Thyroid gland (tissue), 4 donors: ENCODE measurements at regions of chr22 and their contacts with region 1.

Region 1: DNA sequence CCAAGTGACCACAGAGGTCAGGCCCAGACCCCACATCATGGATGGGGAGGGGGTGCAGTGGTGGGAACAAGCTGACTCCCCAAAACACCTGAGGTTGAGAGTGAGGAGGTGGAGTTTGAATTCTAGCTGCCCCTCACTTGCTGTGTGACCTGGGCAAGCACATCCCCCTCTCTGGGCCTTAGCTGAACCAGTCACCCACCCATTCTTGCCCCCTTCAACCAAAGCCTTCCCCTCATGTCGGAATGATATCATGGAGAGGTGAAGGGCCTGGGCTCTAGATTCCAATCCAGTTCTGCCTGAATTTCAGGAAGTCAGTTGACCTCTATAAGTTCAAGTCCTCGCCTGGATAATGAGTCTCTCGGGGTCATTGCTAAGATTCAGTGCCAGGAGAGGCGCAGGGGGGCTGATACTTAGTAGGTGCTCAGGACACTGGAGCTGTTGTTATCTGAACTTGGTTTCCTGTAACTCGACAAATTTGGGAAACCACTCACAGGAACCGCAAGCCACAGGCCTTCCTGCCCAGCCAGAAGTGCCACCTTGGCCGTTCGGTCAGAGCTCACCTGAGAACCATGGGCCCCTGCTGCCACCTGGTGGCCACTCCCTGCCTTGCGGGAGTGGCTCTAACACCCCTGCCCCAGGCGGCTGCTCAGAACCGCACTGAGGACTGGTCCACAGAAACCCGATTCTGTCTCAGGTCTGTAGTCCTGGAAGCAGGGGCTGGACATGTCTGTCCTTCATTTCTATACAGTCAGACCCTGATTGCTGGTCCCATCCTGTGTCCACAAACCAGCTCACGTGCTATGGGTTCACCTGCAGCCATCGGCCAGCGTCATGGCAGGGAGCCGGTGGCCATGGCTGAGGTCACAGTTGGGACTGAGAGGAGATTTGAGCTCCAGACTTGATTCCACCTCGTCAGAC is 6.9 kb downstream of the CDC42EP1 start:
- DNase-seq: peak; percentile 87 to 91
- H3K4me3 ChIP-seq: no peak overlapping the region
- H3K27ac ChIP-seq: peak overlapping the region in 2 of 3 donors; percentile 5 to 50
- H3K4me1 ChIP-seq: peaks cover 28 to 54% of the 10 kb centered on the region in 2 donors
- H3K27me3 ChIP-seq: no peaks in the 10 kb centered on the region
- CTCF ChIP-seq: peak; percentile 92 to 96 (median 94)
- POLR2A ChIP-seq: no peak

Region 2: GRCh38 chr22:37519268-37520195 is 47.6 kb before region 1 on chr22 and contains the start of gene CARD10:
- intact Hi-C with region 1: no loop called
- DNase-seq: peak; percentile 39 to 47
- H3K4me3 ChIP-seq: peak within 1 kb of the TSS in 2 of 3 donors; percentile 24 to 49
- H3K27ac ChIP-seq: peak within 1 kb of the TSS in 2 of 3 donors; percentile 41 to 53
- H3K4me1 ChIP-seq: peaks cover 3 to 14% of the 10 kb centered on the region in 2 donors
- H3K27me3 ChIP-seq: no peaks in the 10 kb centered on the region
- CTCF ChIP-seq: no peak
- POLR2A ChIP-seq: no peak
- total RNA-seq, gene CARD10: 6.5 to 17.3 (median 11.0) TPM

Region 3: DNA sequence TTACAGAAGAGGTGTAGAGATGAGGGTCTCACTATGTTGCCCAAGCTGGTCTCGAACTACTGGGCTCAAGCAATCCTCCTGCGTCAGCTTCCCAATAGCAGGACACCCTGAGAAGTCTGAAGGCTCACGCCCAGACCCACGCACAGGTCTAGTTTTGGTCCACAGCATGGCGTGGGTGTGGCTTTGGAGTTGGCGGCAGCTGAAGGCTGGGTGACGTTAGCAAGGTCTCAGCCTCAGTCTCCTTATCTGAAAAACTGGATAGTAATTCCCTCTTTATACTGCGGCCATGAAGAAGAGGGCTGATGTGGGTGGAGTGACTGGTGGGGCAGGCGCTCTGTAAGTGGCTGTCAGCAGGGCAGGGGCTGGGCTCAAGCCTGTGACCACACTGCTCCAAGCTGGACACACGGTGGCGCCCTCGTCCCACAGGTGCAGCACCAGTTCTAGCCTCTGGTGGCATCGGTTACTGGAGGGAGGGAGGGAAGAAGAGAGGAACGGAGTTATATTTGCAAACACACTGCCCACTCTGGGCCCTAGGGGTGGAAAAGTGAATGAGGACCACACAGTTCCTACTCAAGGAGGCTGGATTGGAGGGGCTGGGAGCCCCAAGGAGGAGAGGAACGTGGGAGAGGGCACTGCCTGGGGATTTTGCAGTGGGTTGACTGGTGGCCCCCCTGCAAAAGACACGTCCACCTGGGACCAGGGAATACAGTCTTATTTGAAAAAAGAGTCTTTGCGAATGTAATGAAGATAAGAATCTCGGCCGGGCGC is 28.4 kb before region 1 on chr22:
- intact Hi-C with region 1: loop called (anchors 2 kb)
- DNase-seq: peak; percentile 92 to 95
- H3K4me3 ChIP-seq: no peak overlapping the region
- H3K27ac ChIP-seq: no peak overlapping the region
- H3K4me1 ChIP-seq: peaks cover 5 to 11% of the 10 kb centered on the region in 2 donors
- H3K27me3 ChIP-seq: no peaks in the 10 kb centered on the region
- CTCF ChIP-seq: peak; percentile 90 to 100 (median 97)
- POLR2A ChIP-seq: no peak